ENCODE measurements at regions of chr7 and their contacts with region 1.

Region 1: GRCh38 chr7:101085162-101085987 is at the start of gene TRIM56:
- DNase-seq: peak; percentile 86 to 89
- ATAC-seq: peak; percentile 92 to 96 (median 96)
- H3K4me3 ChIP-seq: peak within 1 kb of the TSS; percentile 63 to 91 (median 76)
- H3K27ac ChIP-seq: peak within 1 kb of the TSS; percentile 91 to 98 (median 94)
- H3K4me1 ChIP-seq: peaks cover 0 to 50% (median 33%) of the 10 kb centered on the region in 9 donors
- H3K27me3 ChIP-seq: no peaks in the 10 kb centered on the region
- CTCF ChIP-seq: no peak
- total RNA-seq, gene TRIM56: 12.8 to 28.4 (median 16.7) TPM

Region 2: DNA sequence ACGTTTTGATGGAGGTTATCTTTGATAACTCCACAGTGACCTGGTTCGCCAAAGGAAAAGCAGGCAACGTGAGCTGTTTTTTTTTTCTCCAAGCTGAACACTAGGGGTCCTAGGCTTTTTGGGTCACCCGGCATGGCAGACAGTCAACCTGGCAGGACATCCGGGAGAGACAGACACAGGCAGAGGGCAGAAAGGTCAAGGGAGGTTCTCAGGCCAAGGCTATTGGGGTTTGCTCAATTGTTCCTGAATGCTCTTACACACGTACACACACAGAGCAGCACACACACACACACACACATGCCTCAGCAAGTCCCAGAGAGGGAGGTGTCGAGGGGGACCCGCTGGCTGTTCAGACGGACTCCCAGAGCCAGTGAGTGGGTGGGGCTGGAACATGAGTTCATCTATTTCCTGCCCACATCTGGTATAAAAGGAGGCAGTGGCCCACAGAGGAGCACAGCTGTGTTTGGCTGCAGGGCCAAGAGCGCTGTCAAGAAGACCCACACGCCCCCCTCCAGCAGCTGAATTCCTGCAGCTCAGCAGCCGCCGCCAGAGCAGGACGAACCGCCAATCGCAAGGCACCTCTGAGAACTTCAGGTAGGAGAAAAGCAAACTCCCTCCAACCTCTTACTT is 41.4 kb after region 1 on chr7 and contains the start of gene SERPINE1:
- intact Hi-C with region 1: loop called in 1 of 10 experiments (anchors 5 kb)
- DNase-seq: peak; percentile 82 to 93
- ATAC-seq: peak; percentile 83 to 90 (median 88)
- H3K4me3 ChIP-seq: peak within 1 kb of the TSS in 9 of 10 donors; percentile 9 to 49 (median 37)
- H3K27ac ChIP-seq: peak within 1 kb of the TSS; percentile 55 to 86 (median 71)
- H3K4me1 ChIP-seq: peaks cover 17 to 73% (median 46%) of the 10 kb centered on the region in 9 donors
- H3K27me3 ChIP-seq: peaks cover 0 to 18% (median 0%) of the 10 kb centered on the region in 7 donors
- CTCF ChIP-seq: peak in 4 of 9 donors; percentile 13 to 30 (median 25)
- total RNA-seq, gene SERPINE1: 1.2 to 67.8 (median 4.6) TPM

Region 3: DNA sequence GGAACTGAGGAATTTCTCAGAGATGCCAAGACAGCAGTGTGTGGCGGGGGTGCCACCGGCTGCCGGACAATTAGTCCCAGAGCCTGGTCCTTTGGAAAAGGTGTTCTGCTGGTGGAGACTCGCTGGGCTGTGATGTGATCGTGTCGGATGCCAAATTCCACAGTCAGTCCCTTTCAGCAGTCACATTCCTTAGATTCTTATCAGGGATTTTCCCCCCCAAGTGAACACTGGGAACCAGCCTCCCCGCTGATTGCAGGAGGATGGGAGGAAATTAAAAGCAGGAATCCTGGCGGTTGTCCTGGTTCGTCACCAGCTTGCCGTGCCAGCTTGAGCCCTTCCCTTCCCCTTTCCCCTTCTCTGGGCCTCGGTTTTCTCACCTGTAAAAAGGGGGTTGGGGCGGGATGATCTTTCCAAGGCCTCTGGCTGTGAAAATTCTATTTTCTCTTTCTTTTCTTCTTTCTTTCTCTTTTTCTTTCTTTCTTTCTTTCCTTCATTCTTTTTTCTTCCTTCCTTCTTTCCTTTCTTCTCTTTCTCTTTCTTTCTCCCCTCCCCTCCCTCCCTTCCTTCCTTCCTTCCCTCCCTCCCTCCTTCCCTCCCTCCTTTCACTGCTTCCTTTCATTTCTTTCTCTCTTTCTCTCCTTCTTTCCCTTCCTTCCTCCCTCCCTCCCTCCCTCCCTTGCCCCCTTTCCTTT is 316.9 kb after region 1 on chr7:
- intact Hi-C with region 1: no loop called
- DNase-seq: no peak
- ATAC-seq: no peak
- H3K4me3 ChIP-seq: no peak overlapping the region
- H3K27ac ChIP-seq: no peak overlapping the region
- H3K4me1 ChIP-seq: peaks cover 0 to 7% (median 0%) of the 10 kb centered on the region in 9 donors
- H3K27me3 ChIP-seq: peaks cover 0 to 77% (median 44%) of the 10 kb centered on the region in 7 donors
- CTCF ChIP-seq: no peak